ENCODE measurements at regions of chr2 and their contacts with region 1.

Region 1: GRCh38 chr2:21042958-21043743 is 722 bp downstream of the APOB start:
- DNase-seq: peak in 1 of 2 donors; percentile 84
- H3K4me3 ChIP-seq: peak overlapping the region in 1 of 2 donors; percentile 61
- H3K27ac ChIP-seq: peak overlapping the region; percentile 72 to 92
- H3K4me1 ChIP-seq: peaks cover 11 to 15% of the 10 kb centered on the region in 2 donors
- H3K27me3 ChIP-seq: no peaks in the 10 kb centered on the region
- CTCF ChIP-seq: peak; percentile 95 to 99 (median 98)

Region 2: DNA sequence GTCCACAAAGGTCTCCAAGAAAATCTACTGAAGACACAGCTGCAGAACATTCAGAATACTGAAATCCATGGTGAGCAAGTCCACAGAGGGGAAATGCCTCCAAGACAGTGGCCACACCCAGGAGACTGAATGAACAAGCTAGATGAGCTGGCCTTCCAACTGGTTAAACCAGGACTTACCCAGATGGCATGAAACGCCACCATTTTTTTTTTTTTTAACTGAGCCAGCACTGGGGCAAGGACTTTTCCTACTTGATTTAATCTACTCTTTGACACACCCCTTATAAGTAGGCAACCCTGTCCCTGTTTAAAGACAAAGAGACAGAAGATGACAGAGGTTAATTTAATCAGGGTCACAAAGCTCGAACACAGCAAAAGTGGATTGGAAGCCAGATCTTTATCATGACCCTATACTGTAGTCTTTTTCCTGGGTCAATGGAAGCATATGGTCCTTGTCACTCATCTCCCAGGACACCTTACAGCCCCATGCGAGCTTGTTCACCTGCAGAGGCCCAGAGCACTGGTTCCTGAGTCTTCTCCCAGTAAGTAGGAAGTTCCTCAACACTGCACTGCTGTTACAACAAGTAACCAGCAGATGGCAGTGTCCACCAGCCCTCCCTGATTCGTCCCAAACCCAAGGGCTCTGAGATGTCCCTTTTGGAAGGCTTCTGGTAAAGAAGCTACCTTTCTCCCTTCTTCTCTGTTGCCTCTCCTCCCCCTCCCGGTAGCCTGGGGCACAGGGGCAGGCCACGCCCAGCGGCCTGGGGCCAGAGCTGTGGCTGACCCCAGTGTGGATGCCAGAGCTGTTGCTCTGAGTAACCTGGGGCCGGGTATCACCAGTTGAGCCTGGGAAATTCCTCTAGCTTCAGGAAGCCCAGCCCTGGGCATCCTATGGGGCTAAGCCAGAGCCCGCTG is 381.8 kb before region 1 on chr2:
- intact Hi-C with region 1: loop called (anchors 2 kb)
- DNase-seq: peak in 1 of 2 donors; percentile 88
- H3K4me3 ChIP-seq: no peak overlapping the region
- H3K27ac ChIP-seq: no peak overlapping the region
- H3K4me1 ChIP-seq: peaks cover 0 to 7% of the 10 kb centered on the region in 2 donors
- H3K27me3 ChIP-seq: no peaks in the 10 kb centered on the region
- CTCF ChIP-seq: peak; percentile 94 to 98 (median 96)

Region 3: GRCh38 chr2:20822535-20823490 is 220.3 kb before region 1 on chr2 and contains the start of gene LDAH:
- intact Hi-C with region 1: loop called (anchors 5 kb)
- DNase-seq: peak; percentile 66 to 95
- H3K4me3 ChIP-seq: peak within 1 kb of the TSS; percentile 92 to 97
- H3K27ac ChIP-seq: peak within 1 kb of the TSS; percentile 96 to 97
- H3K4me1 ChIP-seq: peaks cover 0 to 3% of the 10 kb centered on the region in 2 donors
- H3K27me3 ChIP-seq: no peaks in the 10 kb centered on the region
- CTCF ChIP-seq: no peak
- total RNA-seq, gene LDAH: 15.6 TPM

Region 4: DNA sequence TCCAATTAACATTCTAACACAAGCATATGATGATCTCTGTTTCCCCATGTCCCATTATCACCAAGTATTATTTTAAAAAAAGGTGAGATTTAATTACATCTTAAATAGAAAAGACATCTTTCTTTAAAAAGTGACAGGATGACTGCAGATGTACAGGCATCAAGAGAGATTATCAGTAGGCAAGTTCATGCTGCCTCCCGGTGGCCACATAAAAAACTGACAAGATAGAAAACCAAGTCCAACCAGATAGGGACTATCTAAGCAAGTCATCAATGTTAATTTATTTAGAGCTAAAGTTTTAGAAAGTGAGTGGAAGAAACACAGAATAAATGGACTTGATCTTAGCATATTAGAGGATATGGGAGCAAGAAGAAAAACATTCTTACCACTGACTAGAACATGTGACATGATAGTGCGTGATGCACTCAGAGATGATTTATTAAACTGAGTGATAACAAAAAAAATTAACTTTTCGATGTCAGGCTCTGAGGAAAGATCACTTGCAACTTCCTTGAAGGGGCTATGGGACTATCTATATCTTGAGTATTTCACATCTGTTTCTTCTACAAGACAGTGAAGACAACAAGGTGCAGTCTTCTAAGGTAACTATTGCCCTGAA is 75.3 kb after region 1 on chr2:
- intact Hi-C with region 1: loop called (anchors 1 kb)
- DNase-seq: peak in 1 of 2 donors; percentile 63
- H3K4me3 ChIP-seq: no peak overlapping the region
- H3K27ac ChIP-seq: no peak overlapping the region
- H3K4me1 ChIP-seq: no peaks in the 10 kb centered on the region
- H3K27me3 ChIP-seq: no peaks in the 10 kb centered on the region
- CTCF ChIP-seq: peak; percentile 37 to 66 (median 55)

Region 5: DNA sequence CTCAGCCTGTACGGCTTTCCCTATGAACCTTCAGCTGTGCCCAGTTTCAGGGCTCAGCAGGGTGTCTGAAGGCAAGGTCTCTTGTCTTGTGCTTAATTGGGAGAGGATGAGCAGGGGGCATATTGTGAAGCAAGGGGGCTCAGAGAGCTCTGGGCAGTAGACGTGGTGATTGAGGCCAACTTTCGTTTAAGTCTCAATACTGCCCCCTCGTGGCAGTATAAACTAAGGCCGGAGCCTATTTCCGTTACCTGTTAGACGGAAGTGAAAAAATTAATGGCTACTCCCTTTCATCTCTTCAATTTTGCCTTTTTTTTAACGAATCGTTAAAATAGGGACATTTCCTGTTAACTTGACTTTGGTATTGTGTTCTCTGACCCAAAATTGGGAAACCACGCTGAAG is 274.0 kb after region 1 on chr2:
- intact Hi-C with region 1: loop called (anchors 2 kb)
- DNase-seq: peak in 1 of 2 donors; percentile 69
- H3K4me3 ChIP-seq: no peak overlapping the region
- H3K27ac ChIP-seq: no peak overlapping the region
- H3K4me1 ChIP-seq: no peaks in the 10 kb centered on the region
- H3K27me3 ChIP-seq: no peaks in the 10 kb centered on the region
- CTCF ChIP-seq: peak; percentile 50 to 80 (median 61)

Measured in ascending aorta (tissue), 2 donors.